Dorsolateral prefrontal cortex (tissue), 120 donors: ENCODE measurements at regions of chr16 and their contacts with region 1.

Region 1: GRCh38 chr16:4511441-4512082 is 27.0 kb downstream of the CDIP1 start:
- DNase-seq: peak; percentile 55 to 85 (median 74)
- H3K4me3 ChIP-seq: no peak overlapping the region
- H3K27ac ChIP-seq: peak overlapping the region in 55 of 59 donors; percentile 11 to 89 (median 77)
- H3K27me3 ChIP-seq: no peaks in the 10 kb centered on the region
- CTCF ChIP-seq: peak in 55 of 56 donors; percentile 32 to 75 (median 62)

Region 2: DNA sequence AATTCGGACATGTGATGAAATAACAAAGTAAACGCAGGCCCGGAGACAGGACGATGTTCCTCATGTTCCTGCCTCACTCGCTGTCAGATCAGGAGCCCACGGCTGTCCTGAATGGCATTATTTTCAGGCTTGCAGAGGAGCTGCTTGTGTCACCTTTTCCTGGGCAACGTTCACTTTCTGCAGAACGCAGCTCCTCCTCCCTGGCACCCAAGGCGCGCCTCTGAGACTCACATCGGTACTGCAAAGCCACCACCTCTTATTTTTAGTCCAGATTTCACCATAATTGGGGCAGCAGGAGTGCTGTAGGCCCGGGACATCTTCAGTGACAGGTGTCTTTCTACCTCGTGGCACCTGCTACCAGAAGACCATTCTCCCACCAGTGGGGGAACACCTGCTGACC is 36.6 kb after region 1 on chr16:
- intact Hi-C with region 1: loop called (anchors 2 to 5 kb)
- DNase-seq: no peak
- H3K4me3 ChIP-seq: no peak overlapping the region
- H3K27ac ChIP-seq: peak overlapping the region in 1 of 59 donors; percentile 38
- H3K27me3 ChIP-seq: no peaks in the 10 kb centered on the region
- CTCF ChIP-seq: no peak

Region 3: DNA sequence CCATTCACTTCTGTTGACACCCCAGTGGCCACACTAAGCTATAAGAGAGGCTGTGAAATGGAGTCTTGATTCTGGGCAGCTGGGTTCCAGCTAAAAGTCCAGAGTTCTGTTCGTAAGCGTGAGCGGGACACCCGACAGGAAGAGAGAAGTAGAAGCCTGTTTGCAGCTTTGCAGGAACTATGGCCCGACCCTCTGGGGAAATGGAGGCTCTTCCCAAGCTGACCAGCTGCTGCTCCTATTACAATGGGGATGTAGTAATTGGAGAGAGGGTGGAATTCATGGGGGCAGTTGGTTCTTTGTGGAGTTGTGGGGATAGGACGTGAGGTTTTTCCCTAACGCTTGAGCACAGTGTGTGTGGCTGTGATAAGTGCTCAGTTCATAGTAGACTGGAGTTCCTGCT is 74.7 kb after region 1 on chr16:
- intact Hi-C with region 1: loop called (anchors 5 kb)
- DNase-seq: no peak
- H3K4me3 ChIP-seq: no peak overlapping the region
- H3K27ac ChIP-seq: no peak overlapping the region
- H3K27me3 ChIP-seq: no peaks in the 10 kb centered on the region
- CTCF ChIP-seq: no peak